Activated T-helper 2 cell treated with anti-CD3 and anti-CD28 coated beads, Interferon-gamma antibody, Interleukin-2, Interleukin-4, amounts not matched to agents 10 μg/mL and 5 μg/mL and 100 μg/mL, durations not matched to agents 14 hours and 24 hours and 36 hours (primary cell): ENCODE measurements at regions of chrX and their contacts with region 1.

Region 1: GRCh38 chrX:69503782-69504625 is at the start of gene NALF2:
- DNase-seq: peak; percentile 16
- H3K4me3 Mint-ChIP-seq: peak within 1 kb of the TSS; percentile 65
- H3K27ac Mint-ChIP-seq: no peak within 1 kb of the TSS
- H3K4me1 Mint-ChIP-seq: no peaks in the 10 kb centered on the region
- H3K27me3 Mint-ChIP-seq: peaks cover 17% of the 10 kb centered on the region
- total RNA-seq, gene NALF2: 0.25 and 0.37 TPM in 2 replicates

Region 2: DNA sequence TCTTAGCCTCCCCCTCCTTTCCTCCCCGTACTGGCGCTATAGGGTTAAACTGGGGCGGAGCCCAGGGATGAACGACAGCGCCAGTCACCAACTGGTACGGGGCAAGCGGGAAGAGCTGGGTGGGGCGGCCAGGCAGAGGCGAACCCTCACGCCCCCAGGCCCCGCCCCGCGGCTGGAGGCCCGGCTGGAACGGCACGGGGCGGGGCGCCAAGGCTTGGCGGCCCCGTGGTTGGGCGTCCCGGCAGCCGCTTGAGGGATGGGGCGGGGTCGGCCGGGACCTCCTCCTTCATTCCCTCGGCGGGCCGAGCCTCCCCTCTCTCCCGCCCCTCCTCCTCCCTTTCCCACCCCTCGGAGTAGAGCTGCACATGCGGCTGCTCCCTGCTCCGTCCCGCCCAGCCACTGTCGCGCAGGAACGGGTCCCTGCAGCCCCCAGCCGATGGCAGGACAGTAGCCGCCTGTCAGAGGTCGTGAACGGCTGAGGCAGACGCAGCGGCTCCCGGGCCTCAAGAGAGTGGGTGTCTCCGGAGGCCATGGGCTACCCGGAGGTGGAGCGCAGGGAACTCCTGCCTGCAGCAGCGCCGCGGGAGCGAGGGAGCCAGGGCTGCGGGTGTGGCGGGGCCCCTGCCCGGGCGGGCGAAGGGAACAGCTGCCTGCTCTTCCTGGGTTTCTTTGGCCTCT is 111.9 kb after region 1 on chrX and contains the start of gene EDA:
- intact Hi-C with region 1: loop called (anchors 5 kb)
- DNase-seq: peak; percentile 64
- H3K4me3 Mint-ChIP-seq: peak within 1 kb of the TSS; percentile 79
- H3K27ac Mint-ChIP-seq: no peak within 1 kb of the TSS
- H3K4me1 Mint-ChIP-seq: peaks cover 4% of the 10 kb centered on the region
- H3K27me3 Mint-ChIP-seq: peaks cover 11% of the 10 kb centered on the region
- total RNA-seq, gene EDA: 0.57 TPM in 2 replicates